Sigmoid colon (tissue), 7 donors: ENCODE measurements at regions of chr1 and their contacts with region 1.

Region 1: DNA sequence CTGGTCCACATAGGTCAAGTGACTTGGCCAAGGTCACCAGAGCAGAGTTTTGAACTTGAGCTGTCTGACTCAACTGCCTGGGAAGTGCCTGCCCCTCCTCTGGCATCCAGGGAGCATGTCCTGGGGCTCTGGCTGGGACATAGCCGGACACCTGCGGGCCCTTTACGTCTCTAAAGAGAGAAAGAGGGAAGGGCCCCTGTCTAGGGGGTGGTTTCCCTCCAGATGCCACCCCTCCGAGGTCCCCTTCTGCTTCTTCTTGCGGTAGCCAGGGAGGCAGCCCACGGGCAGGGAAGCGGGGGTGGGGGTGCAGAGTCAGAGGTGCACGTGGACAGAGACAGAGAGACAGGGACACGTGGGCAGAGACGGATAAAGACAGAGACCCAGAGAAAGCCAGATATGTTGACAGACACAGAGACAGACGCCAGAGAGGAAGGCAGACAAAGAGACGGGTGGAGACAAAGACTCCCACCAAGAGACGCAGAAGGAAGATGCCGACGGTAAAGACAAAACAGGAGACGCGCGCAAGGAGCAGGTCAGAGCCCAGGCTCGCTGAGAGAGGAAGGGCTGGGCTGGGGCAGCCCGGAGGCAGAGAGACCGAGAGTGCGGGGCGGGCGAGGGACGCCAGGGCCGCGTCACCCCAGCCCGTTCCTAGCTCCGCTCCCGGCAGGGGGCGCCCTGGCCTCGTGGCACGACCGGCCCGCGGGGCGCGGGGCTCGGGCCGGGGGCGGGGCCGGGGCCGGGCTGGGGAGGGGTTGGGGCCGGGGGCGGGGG is 458 bp upstream of the ALPL start:
- DNase-seq: no peak
- H3K4me3 ChIP-seq: peak overlapping the region in 3 of 4 donors; percentile 7 to 36 (median 33)
- H3K27ac ChIP-seq: no peak overlapping the region
- H3K4me1 ChIP-seq: peaks cover 0 to 33% (median 27%) of the 10 kb centered on the region in 4 donors
- H3K27me3 ChIP-seq: peaks cover 11 to 57% (median 35%) of the 10 kb centered on the region in 3 donors
- CTCF ChIP-seq: peak in 2 of 4 experiments; percentile 42 to 43
- EP300 ChIP-seq: no peak
- POLR2A ChIP-seq: no peak

Region 2: GRCh38 chr1:21573971-21574465 is 65.3 kb after region 1 on chr1:
- intact Hi-C with region 1: loop called (anchors 2 kb)
- DNase-seq: peak; percentile 77
- H3K4me3 ChIP-seq: no peak overlapping the region
- H3K27ac ChIP-seq: peak overlapping the region in 3 of 4 donors; percentile 33 to 85 (median 60)
- H3K4me1 ChIP-seq: peaks cover 0 to 14% (median 13%) of the 10 kb centered on the region in 4 donors
- H3K27me3 ChIP-seq: no peaks in the 10 kb centered on the region
- CTCF ChIP-seq: peak in 3 of 4 experiments; percentile 19 to 34 (median 19)
- EP300 ChIP-seq: no peak
- POLR2A ChIP-seq: no peak

Region 3: DNA sequence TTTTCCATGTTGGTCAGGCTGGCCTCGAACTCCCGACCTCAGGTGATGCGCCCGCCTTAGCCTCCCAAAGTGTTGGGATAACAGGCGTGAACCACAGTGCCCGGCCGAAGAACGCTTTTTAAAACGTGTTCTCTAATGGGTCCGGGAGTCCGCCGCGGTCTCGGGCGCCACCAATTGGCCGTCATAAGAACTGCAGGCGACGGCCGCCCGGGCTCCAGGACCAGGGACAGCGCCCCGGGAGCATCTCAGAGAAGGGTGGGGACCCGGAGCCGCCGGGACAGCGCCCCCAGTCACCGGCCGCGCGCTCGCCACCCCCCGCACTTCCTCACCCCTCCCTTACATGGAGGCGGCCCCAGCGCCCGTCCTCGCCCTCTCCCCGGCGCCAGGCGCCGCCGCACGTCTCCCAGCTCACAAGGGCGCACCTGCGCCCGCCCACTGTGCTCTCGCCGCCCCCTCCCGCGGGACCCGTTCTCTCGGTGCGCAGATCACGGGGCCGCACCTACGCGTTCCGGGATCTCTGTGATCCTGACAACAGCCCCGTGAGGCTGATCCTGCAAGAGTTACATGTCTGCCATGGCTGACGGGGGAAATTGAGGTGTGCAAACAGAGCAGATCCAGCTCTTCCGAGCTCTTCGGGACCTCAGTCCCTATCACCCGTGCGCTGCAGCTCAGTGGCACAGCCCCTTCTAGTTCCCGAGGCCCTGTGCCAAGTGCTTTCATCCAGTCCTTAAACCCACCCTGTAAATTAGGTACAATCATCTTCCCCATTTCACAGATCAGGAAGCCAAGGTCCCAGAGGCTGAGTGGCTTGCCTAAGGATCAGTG is 150.5 kb after region 1 on chr1:
- intact Hi-C with region 1: loop called (anchors 2 kb)
- DNase-seq: peak; percentile 77
- H3K4me3 ChIP-seq: no peak overlapping the region
- H3K27ac ChIP-seq: no peak overlapping the region
- H3K4me1 ChIP-seq: peaks cover 0 to 6% (median 5%) of the 10 kb centered on the region in 4 donors
- H3K27me3 ChIP-seq: peaks cover 0 to 51% (median 24%) of the 10 kb centered on the region in 3 donors
- CTCF ChIP-seq: peak; percentile 82 to 96 (median 84)
- EP300 ChIP-seq: no peak
- POLR2A ChIP-seq: no peak